GM12878 (cell line): ENCODE measurements at regions of chr16 and their contacts with region 1.

Region 1: GRCh38 chr16:71883849-71884638 is at the start of gene ZNF821:
- DNase-seq: no peak
- ATAC-seq: peak; percentile 64
- H3K4me3 ChIP-seq: peak within 1 kb of the TSS; percentile 92
- H3K27ac ChIP-seq: peak within 1 kb of the TSS; percentile 71
- H3K4me1 ChIP-seq: peaks cover 12% of the 10 kb centered on the region
- H3K27me3 ChIP-seq: no peaks in the 10 kb centered on the region
- CTCF ChIP-seq: peak in 2 of 3 experiments; percentile 30 to 49; a peak in 2 of 6 replicates
- EP300 ChIP-seq: no peak
- POLR2A ChIP-seq: 0 out of 2 replicates have a peak, but pooled peaks have one; percentile 30
- RAD21 ChIP-seq: no peak
- polyA plus RNA-seq, gene ZNF821: 0.82 to 2.0 TPM

Region 2: DNA sequence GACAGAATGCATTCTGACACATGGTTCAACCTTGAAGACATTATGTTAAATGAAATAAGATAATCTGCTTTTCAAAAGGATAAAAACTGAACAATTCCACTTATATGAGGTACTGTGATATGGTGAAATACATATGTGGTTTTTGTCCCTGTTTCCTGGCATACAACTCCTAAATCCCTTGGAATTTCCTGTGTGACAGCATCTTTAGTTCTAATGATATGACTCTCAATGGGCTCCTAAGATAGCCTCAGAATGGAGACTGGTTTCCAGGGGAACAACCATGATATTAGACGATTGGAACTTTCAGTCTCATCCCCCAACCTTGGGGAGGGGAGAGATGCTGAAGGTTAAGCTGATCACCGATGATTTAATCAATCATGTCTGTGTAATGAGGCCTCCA is 121.9 kb before region 1 on chr16:
- CTCF ChIA-PET with region 1: interaction called, 11 read pairs
- POLR2A ChIA-PET with region 1: interaction called, 3 read pairs
- RAD21 ChIA-PET with region 1: interaction called, 8 read pairs
- SMC1A ChIA-PET with region 1: no interaction called
- in situ Hi-C with region 1: no loop called
- intact Hi-C with region 1: no loop called
- DNase-seq: no peak
- ATAC-seq: no peak
- H3K4me3 ChIP-seq: no peak overlapping the region
- H3K27ac ChIP-seq: no peak overlapping the region
- H3K4me1 ChIP-seq: no peaks in the 10 kb centered on the region
- H3K27me3 ChIP-seq: no peaks in the 10 kb centered on the region
- CTCF ChIP-seq: no peak
- EP300 ChIP-seq: no peak
- POLR2A ChIP-seq: no peak
- RAD21 ChIP-seq: no peak

Region 3: GRCh38 chr16:71794943-71795342 is 89.1 kb before region 1 on chr16:
- CTCF ChIA-PET with region 1: interaction called, 10 read pairs
- POLR2A ChIA-PET with region 1: no interaction called
- RAD21 ChIA-PET with region 1: interaction called, 4 read pairs
- SMC1A ChIA-PET with region 1: interaction called, 10 read pairs
- in situ Hi-C with region 1: no loop called
- intact Hi-C with region 1: no loop called
- DNase-seq: no peak
- ATAC-seq: peak; percentile 48
- H3K4me3 ChIP-seq: no peak overlapping the region
- H3K27ac ChIP-seq: no peak overlapping the region
- H3K4me1 ChIP-seq: peaks cover 3% of the 10 kb centered on the region; the same call in 1 of the 2 replicates
- H3K27me3 ChIP-seq: no peaks in the 10 kb centered on the region
- CTCF ChIP-seq: no peak
- EP300 ChIP-seq: no peak
- POLR2A ChIP-seq: no peak
- RAD21 ChIP-seq: no peak

Region 4: DNA sequence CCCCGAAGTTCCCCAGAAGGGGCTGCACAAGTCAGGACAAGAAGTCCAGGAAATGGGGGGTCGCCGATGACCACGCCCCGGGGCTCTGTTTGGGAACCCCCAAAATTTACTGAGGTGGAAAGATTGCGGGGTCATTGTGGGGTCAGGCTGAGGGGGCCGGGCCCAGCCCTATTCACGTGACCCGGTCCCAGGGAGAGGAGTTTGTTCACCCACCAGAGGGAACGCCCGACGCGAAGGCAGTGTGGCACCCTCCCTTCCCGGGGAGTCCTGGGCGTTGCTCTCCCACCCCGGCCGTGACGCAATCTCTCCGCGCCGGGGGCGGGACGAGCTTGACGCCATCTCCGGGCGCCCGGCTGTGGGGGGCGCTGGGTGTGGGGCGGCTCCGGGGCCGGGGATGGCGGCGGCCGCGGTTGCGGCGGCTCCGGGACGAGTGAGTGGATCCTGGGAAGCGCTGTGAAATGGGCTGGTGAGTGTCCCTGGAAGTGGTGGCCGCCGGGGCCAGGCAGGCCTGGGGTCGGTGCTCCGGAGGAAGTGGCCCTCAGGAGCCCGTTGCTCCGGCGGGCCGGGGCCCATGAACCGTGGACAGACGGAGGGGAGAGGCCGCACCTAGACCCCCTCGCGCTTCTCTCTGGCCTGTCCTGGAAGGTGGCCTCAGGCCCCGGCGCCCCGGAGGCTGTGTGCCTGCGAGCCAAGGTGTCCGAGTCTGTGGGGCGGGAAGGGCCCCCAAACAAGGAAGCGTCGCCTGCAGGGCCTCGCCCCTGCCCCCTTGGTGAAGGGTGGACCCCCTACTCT is 38.2 kb before region 1 on chr16 and contains the start of gene ATXN1L:
- CTCF ChIA-PET with region 1: interaction called, 39 read pairs
- POLR2A ChIA-PET with region 1: interaction called, 21 read pairs
- RAD21 ChIA-PET with region 1: interaction called, 53 read pairs
- SMC1A ChIA-PET with region 1: interaction called, 24 read pairs
- in situ Hi-C with region 1: no loop called
- intact Hi-C with region 1: loop called (anchors 2 kb)
- DNase-seq: peak; percentile 84
- ATAC-seq: peak; percentile 86
- H3K4me3 ChIP-seq: peak within 1 kb of the TSS; percentile 92
- H3K27ac ChIP-seq: peak within 1 kb of the TSS; percentile 90
- H3K4me1 ChIP-seq: peaks cover 44% of the 10 kb centered on the region
- H3K27me3 ChIP-seq: no peaks in the 10 kb centered on the region
- CTCF ChIP-seq: no peak
- EP300 ChIP-seq: peak; percentile 49 to 70; a peak in 2 of 4 replicates
- POLR2A ChIP-seq: peak; percentile 94
- RAD21 ChIP-seq: 0 out of 2 replicates have a peak, but pooled peaks have one; percentile 16
- polyA plus RNA-seq, gene ATXN1L: 1.8 to 2.0 TPM

Region 5: DNA sequence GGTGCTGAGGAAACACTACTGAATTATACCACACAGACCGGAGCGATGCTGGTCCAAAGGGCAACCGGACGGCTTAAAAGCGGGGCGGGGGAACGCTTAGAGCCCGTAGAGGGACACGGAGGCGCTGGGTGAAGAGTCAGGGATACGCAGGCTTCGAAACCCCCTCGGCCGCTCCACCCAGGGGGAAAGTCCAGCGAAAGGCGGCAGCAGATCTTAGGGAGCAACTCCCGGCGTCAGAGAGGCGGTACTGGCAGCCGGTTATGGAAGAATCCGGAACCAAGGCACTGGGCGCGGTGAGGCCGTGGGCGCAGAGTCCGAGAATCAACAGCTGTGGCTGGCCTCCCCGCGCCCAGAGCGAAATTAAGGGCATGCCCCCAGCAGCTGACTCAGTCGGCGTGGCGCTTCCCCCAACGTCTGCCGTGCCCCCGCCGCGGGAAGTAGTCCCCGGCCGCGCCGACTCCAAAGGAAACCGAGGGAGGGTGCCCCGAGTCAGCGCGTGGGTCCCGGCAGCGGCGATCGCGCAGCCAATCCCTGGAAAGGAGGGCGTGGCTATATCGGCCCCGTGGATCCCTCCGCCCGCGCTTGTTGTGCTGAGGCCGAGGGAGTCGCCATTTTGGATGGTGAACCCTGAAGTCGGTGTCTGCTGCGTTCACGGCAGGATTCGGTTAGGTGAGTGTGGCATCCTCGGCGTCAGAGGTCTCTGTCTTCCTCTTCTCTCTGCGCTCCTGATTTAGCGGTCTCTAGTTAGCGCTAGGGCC is 11.1 kb after region 1 on chr16 and contains the start of gene IST1:
- CTCF ChIA-PET with region 1: interaction called, 38 read pairs
- POLR2A ChIA-PET with region 1: interaction called, 34 read pairs
- RAD21 ChIA-PET with region 1: interaction called, 15 read pairs
- SMC1A ChIA-PET with region 1: interaction called, 15 read pairs
- in situ Hi-C with region 1: no loop called
- intact Hi-C with region 1: no loop called
- DNase-seq: peak; percentile 85
- ATAC-seq: peak; percentile 90
- H3K4me3 ChIP-seq: peak within 1 kb of the TSS; percentile 91
- H3K27ac ChIP-seq: peak within 1 kb of the TSS; percentile 98
- H3K4me1 ChIP-seq: no peaks in the 10 kb centered on the region
- H3K27me3 ChIP-seq: no peaks in the 10 kb centered on the region
- CTCF ChIP-seq: no peak
- EP300 ChIP-seq: peak in 1 of 2 experiments; percentile 33; a peak in 2 of 4 replicates
- POLR2A ChIP-seq: peak; percentile 93
- RAD21 ChIP-seq: no peak
- polyA plus RNA-seq, gene IST1: 97.3 to 136 TPM